CD8-positive, alpha-beta T cell (primary cell): ENCODE measurements at regions of chr3 and their contacts with region 1.

Region 1: DNA sequence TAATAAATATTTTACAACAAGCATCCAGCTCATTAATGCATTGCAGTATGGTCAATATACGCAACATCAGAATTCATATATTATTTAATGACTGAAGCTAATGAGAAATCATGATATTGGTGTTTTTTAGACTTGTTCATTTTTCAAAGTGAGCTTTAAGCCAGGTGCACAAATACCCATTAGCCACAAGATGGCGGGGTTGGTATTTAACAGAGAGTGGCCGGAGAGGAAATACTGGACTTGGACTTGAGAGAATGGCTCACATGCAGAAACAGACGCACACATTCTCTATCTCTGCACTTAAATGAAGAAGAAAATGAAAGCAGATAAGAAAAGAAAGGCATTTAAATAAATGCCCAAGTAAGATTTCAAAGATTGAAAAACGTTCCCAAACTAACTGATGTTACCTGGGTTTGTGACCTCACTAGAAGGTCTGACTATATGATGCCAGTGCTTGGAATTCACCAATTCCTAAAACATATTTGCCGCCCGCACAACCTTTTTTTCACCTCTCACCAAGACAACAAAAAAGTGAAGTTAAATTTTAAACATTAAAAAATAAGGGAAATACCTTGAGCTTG is 21.2 kb upstream of the CRBN start:
- DNase-seq: peak in 5 of 9 experiments; percentile 24 to 68 (median 44)
- ATAC-seq: no peak
- H3K4me3 ChIP-seq: no peak overlapping the region
- H3K4me3 Mint-ChIP-seq: no peak overlapping the region
- H3K27ac ChIP-seq: no peak overlapping the region
- H3K27ac Mint-ChIP-seq: no peak overlapping the region
- H3K4me1 ChIP-seq: peaks cover 4% of the 10 kb centered on the region
- H3K4me1 Mint-ChIP-seq: peaks cover 18% of the 10 kb centered on the region
- H3K27me3 ChIP-seq: no peaks in the 10 kb centered on the region
- H3K27me3 Mint-ChIP-seq: no peaks in the 10 kb centered on the region
- CTCF ChIP-seq: peak; percentile 65

Region 2: DNA sequence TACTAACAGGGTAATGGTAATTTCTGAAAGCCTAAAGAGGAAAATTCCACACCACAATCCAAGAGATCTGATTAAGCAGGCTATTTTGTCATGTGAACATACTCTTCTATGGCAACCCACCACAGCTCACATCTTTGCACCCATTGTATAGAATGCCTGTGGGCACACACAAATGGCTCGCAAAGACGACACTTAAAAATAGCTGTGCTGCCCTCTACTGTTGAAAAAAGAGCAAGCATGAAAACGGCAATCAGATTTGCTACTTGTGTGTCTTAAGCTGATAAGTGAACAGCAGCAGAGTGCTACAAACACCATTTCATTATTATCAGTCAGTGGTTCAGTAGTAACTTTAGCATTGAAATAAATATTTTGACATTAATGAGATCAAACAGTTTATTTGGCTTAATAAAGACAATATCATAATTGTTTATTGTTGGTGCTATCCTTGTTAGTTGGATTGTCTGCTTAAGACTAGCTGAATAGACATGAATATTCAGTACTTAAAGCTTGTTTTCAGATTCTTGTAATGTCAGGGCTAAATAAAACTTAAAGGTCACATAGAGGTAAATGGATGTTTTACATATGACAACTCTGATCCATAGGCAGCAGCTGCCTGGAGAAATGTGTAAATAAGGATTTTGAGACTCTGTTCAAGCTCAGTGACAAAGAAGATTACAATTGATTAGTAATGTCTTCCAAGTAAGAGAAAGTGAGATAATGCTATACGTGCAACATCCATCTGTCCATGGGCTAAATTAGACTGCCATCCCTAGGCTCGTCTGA is 797.6 kb after region 1 on chr3:
- CTCF ChIA-PET with region 1: interaction called, 36 read pairs
- POLR2A ChIA-PET with region 1: no interaction called
- intact Hi-C with region 1: loop called in 1 of 2 experiments (anchors 5 kb)
- DNase-seq: peak in 4 of 9 experiments; percentile 6 to 43 (median 15)
- ATAC-seq: no peak
- H3K4me3 ChIP-seq: no peak overlapping the region
- H3K4me3 Mint-ChIP-seq: no peak overlapping the region
- H3K27ac ChIP-seq: no peak overlapping the region
- H3K27ac Mint-ChIP-seq: no peak overlapping the region
- H3K4me1 ChIP-seq: no peaks in the 10 kb centered on the region
- H3K4me1 Mint-ChIP-seq: no peaks in the 10 kb centered on the region
- H3K27me3 ChIP-seq: no peaks in the 10 kb centered on the region
- H3K27me3 Mint-ChIP-seq: peaks cover 2% of the 10 kb centered on the region
- CTCF ChIP-seq: peak; percentile 23

Region 3: GRCh38 chr3:4271834-4272233 is 1071.1 kb after region 1 on chr3:
- CTCF ChIA-PET with region 1: interaction called, 5 read pairs
- POLR2A ChIA-PET with region 1: no interaction called
- intact Hi-C with region 1: loop called (anchors 1 to 5 kb)
- DNase-seq: peak in 2 of 9 experiments; percentile 12 to 35
- ATAC-seq: no peak
- H3K4me3 ChIP-seq: no peak overlapping the region
- H3K4me3 Mint-ChIP-seq: no peak overlapping the region
- H3K27ac ChIP-seq: no peak overlapping the region
- H3K27ac Mint-ChIP-seq: no peak overlapping the region
- H3K4me1 ChIP-seq: peaks cover 16% of the 10 kb centered on the region
- H3K4me1 Mint-ChIP-seq: peaks cover 12% of the 10 kb centered on the region
- H3K27me3 ChIP-seq: no peaks in the 10 kb centered on the region
- H3K27me3 Mint-ChIP-seq: no peaks in the 10 kb centered on the region
- CTCF ChIP-seq: peak; percentile 33

Region 4: DNA sequence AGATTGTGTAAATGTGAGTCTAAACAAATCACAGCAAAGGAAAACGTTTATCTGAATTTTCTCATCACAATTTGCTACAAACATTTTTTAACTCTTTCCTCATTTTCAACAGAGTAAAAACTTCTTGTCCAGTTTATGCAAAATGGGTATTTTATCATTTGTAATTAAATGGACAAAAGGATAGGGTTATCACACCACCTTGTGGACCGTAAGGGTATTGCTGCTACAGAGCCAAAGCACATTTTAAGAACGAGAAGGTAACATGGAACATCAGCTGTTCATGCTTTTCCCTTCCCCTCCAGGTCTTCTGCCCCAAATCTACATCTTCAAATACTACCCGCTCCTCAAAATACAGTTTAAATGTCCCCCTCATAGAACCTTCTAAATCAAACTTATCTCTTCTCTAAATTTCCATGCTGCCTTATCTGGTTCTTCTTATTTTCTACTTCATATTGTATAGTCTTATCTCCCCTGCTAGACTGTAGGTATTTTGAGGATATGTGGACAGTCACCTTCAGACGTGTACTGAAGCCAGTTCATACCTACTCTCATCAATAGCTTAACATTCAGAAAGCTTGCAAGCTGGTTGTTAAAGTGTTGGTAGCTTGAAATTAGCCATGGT is 1089.7 kb after region 1 on chr3:
- CTCF ChIA-PET with region 1: interaction called, 14 read pairs
- POLR2A ChIA-PET with region 1: no interaction called
- intact Hi-C with region 1: loop called (anchors 1 to 2 kb)
- DNase-seq: peak in 5 of 9 experiments; percentile 8 to 69 (median 39)
- ATAC-seq: peak; percentile 81
- H3K4me3 ChIP-seq: no peak overlapping the region
- H3K4me3 Mint-ChIP-seq: no peak overlapping the region
- H3K27ac ChIP-seq: no peak overlapping the region
- H3K27ac Mint-ChIP-seq: no peak overlapping the region
- H3K4me1 ChIP-seq: peaks cover 11% of the 10 kb centered on the region
- H3K4me1 Mint-ChIP-seq: peaks cover 17% of the 10 kb centered on the region
- H3K27me3 ChIP-seq: no peaks in the 10 kb centered on the region
- H3K27me3 Mint-ChIP-seq: no peaks in the 10 kb centered on the region
- CTCF ChIP-seq: peak; percentile 97